Caco-2 (cell line): ENCODE measurements at regions of chr13 and their contacts with region 1.

Region 1: GRCh38 chr13:77975393-77976067 is 56.9 kb upstream of the EDNRB start:
- DNase-seq: peak; percentile 75 to 84
- H3K4me3 ChIP-seq: peak overlapping the region; percentile 43
- H3K4me3 Mint-ChIP-seq: peak overlapping the region; percentile 92
- H3K27ac Mint-ChIP-seq: peak overlapping the region; percentile 94
- H3K4me1 ChIP-seq: peaks cover 20% of the 10 kb centered on the region
- H3K4me1 Mint-ChIP-seq: peaks cover 26% of the 10 kb centered on the region
- H3K27me3 ChIP-seq: no peaks in the 10 kb centered on the region
- H3K27me3 Mint-ChIP-seq: no peaks in the 10 kb centered on the region
- CTCF ChIP-seq: no peak

Region 2: DNA sequence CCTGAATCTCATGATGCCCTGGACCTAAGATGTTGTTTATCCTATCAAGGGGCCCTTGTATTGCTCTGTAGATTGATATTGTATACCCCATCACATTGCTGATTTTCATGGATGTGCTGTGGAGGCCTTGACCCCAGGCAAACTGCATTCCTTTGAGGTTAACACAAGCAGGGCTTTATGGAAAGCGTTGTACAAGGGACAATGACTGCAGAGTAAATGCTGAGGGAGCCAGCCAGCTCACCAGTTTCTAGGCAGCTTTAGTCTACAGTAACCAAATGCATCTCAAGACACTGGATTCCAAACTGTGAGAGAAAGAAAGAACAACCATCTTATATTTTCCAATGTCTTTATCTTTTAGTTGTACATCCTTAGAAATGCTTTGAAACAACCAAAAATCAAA is 22.8 kb before region 1 on chr13:
- CTCF ChIA-PET with region 1: no interaction called
- POLR2A ChIA-PET with region 1: no interaction called
- intact Hi-C with region 1: loop called (anchors 2 kb)
- DNase-seq: peak in 1 of 2 experiments; percentile 4
- H3K4me3 ChIP-seq: no peak overlapping the region
- H3K4me3 Mint-ChIP-seq: no peak overlapping the region
- H3K27ac Mint-ChIP-seq: no peak overlapping the region
- H3K4me1 ChIP-seq: peaks cover 14% of the 10 kb centered on the region
- H3K4me1 Mint-ChIP-seq: peaks cover 21% of the 10 kb centered on the region
- H3K27me3 ChIP-seq: no peaks in the 10 kb centered on the region
- H3K27me3 Mint-ChIP-seq: no peaks in the 10 kb centered on the region
- CTCF ChIP-seq: no peak

Region 3: DNA sequence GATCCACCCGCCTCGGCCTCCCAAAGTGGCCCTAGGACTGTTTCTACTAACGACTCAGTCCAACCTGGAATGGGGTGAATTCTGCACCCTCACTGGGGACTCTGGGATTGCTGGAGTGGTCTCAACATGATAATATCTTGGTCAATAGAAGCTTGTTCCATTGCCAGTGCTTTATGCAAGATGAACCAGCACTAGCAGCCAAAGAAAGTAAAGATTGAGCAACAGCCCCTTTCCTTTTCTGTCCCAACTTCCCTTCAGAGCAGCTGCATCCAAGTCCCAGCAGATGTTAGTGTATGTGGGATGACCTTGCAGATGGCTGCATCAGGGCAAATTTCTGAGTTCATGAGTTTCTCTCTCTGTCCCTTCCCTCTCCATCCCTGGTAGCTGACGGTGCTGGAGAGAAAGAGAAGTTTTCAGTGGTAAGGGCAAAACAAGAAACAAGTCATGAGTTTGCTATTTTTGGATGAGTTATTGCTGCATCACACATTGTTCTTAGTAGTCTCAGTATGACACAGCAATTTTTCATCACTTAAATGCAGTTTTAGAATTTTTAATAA is 126.7 kb after region 1 on chr13:
- CTCF ChIA-PET with region 1: no interaction called
- POLR2A ChIA-PET with region 1: no interaction called
- intact Hi-C with region 1: no loop called
- DNase-seq: no peak
- H3K4me3 ChIP-seq: no peak overlapping the region
- H3K4me3 Mint-ChIP-seq: no peak overlapping the region
- H3K27ac Mint-ChIP-seq: no peak overlapping the region
- H3K4me1 ChIP-seq: no peaks in the 10 kb centered on the region
- H3K4me1 Mint-ChIP-seq: no peaks in the 10 kb centered on the region
- H3K27me3 ChIP-seq: no peaks in the 10 kb centered on the region
- H3K27me3 Mint-ChIP-seq: no peaks in the 10 kb centered on the region
- CTCF ChIP-seq: no peak

Region 4: DNA sequence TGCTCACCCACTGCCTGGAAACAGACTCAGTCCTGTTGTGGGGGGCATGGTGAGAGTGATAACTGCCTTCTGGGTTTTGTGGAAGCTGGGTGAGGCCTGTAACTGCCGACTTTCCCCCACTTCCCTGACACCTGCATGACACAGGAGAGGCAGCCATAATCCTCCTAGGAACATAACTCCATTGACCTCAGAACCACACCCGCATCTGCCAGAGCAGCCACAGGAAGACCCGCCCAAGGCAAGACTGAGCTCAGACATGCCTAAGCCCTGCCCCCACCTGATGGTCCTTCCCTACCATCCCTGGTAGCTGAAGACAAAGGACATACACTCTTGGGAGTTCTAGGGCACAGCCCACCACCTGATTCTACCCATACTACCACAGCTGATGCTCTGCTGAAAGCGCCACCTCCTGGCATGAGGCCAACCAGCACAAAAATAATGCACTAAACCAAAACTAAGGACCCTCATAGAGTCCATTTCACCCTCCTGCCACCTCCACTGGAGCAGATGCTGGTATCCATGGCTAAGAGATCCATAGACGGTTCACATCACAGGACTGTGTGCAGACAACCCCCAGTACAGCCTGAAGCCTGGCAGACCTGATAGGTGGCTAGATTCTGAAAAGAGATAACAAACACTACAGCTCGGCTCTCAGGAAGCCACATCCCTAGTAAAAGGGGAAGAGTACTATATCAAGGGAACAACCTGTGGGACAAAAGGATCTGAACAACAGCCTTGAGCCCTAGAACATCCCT is 1104.0 kb after region 1 on chr13:
- CTCF ChIA-PET with region 1: no interaction called
- POLR2A ChIA-PET with region 1: no interaction called
- intact Hi-C with region 1: no loop called
- DNase-seq: no peak
- H3K4me3 ChIP-seq: no peak overlapping the region
- H3K4me3 Mint-ChIP-seq: no peak overlapping the region
- H3K27ac Mint-ChIP-seq: no peak overlapping the region
- H3K4me1 ChIP-seq: no peaks in the 10 kb centered on the region
- H3K4me1 Mint-ChIP-seq: no peaks in the 10 kb centered on the region
- H3K27me3 ChIP-seq: no peaks in the 10 kb centered on the region
- H3K27me3 Mint-ChIP-seq: peaks cover 7% of the 10 kb centered on the region
- CTCF ChIP-seq: no peak